ENCODE measurements at regions of chr6 and their contacts with region 1.

Region 1: GRCh38 chr6:166950443-166950821 is 5.9 kb downstream of the RNASET2 start:
- DNase-seq: no peak
- H3K4me3 ChIP-seq: no peak overlapping the region
- H3K27ac ChIP-seq: peak overlapping the region; percentile 4 to 53 (median 30)
- H3K4me1 ChIP-seq: peaks cover 0 to 8% (median 3%) of the 10 kb centered on the region in 4 donors
- H3K27me3 ChIP-seq: no peaks in the 10 kb centered on the region
- CTCF ChIP-seq: no peak
- EP300 ChIP-seq: no peak
- POLR2A ChIP-seq: no peak

Region 2: GRCh38 chr6:166736634-166737033 is 213.8 kb before region 1 on chr6:
- intact Hi-C with region 1: no loop called
- DNase-seq: no peak
- H3K4me3 ChIP-seq: no peak overlapping the region
- H3K27ac ChIP-seq: no peak overlapping the region
- H3K4me1 ChIP-seq: peaks cover 0 to 22% (median 9%) of the 10 kb centered on the region in 4 donors
- H3K27me3 ChIP-seq: no peaks in the 10 kb centered on the region
- CTCF ChIP-seq: no peak
- EP300 ChIP-seq: no peak
- POLR2A ChIP-seq: no peak

Region 3: GRCh38 chr6:166786704-166787293 is 163.6 kb before region 1 on chr6:
- intact Hi-C with region 1: loop called (anchors 2 kb)
- DNase-seq: no peak
- H3K4me3 ChIP-seq: no peak overlapping the region
- H3K27ac ChIP-seq: no peak overlapping the region
- H3K4me1 ChIP-seq: no peaks in the 10 kb centered on the region
- H3K27me3 ChIP-seq: no peaks in the 10 kb centered on the region
- CTCF ChIP-seq: peak; percentile 37 to 75 (median 61)
- EP300 ChIP-seq: no peak
- POLR2A ChIP-seq: no peak